Activated CD8-positive, alpha-beta T cell treated with anti-CD3 and anti-CD28 coated beads for 36 hours (primary cell): ENCODE measurements at regions of chr1 and their contacts with region 1.

Region 1: GRCh38 chr1:23613191-23614031 is 54.1 kb upstream of the ID3 start:
- DNase-seq: peak; percentile 85
- ATAC-seq: peak; percentile 63
- H3K4me3 Mint-ChIP-seq: peak overlapping the region; percentile 28
- H3K27ac Mint-ChIP-seq: peak overlapping the region; percentile 89
- H3K4me1 Mint-ChIP-seq: peaks cover 69% of the 10 kb centered on the region
- H3K27me3 Mint-ChIP-seq: no peaks in the 10 kb centered on the region
- CTCF ChIP-seq: no peak

Region 2: DNA sequence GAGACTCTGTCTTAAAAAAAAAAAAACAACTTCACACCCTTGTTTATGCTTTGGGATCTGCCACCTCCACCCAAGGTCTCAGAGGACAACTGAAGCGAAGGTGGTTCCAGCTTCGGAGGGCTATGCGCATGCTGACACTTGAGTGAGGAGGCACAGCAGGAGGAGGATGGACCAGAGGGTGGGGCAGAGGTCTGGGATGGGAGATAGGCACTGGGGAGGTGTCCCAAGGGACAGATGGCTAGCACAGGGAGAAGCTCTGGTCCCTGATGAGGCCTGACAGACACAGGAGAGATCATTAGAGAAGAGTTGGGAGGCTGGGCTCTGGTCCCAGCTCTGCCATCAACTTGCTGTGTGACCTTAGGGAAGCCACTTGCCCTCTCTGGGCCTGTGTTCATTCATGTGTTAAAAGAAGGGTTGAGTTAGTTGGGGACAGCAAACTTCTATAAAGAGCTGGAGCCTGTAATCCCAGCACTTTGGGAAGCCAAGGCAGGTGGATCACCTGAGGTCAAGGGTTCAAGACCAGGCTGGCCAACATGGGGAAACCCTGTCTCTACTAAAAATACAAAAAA is 99.2 kb before region 1 on chr1:
- CTCF ChIA-PET with region 1: no interaction called
- POLR2A ChIA-PET with region 1: no interaction called
- intact Hi-C with region 1: no loop called
- DNase-seq: no peak
- ATAC-seq: no peak
- H3K4me3 Mint-ChIP-seq: no peak overlapping the region
- H3K27ac Mint-ChIP-seq: no peak overlapping the region
- H3K4me1 Mint-ChIP-seq: no peaks in the 10 kb centered on the region
- H3K27me3 Mint-ChIP-seq: no peaks in the 10 kb centered on the region
- CTCF ChIP-seq: no peak

Region 3: DNA sequence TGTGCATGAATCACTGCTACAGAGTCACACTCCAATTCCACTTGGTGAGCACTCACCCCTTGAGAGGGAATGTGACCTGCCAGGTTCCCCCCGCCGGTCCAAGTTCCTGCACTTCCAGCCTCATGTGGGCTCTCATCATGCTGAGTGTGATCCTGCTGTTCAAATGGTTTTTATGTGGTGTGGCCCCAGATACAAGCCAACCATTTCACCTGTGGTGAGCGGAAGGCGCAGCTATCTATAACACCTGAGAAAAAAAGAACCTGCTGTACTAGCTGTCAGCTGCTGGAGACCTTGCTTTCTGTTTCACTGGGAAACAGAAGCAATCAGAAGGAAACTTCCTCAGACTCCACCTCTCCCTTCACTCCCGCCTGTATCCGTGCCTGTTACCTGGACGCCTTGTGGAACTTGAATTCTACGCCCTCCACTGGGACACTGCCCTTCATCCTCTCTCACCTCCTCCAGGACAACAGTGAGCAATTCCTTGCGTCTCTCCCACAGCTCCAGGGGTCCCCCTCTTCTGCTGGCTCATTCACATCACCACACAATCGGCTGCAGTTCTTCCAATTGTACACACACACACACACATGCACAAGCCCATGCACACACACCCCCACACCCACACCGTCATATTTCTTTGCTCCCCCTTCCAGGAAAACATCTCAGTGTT is 13.8 kb after region 1 on chr1:
- CTCF ChIA-PET with region 1: interaction called, 4 read pairs
- POLR2A ChIA-PET with region 1: interaction called, 11 read pairs
- intact Hi-C with region 1: no loop called
- DNase-seq: peak; percentile 37
- ATAC-seq: peak; percentile 13
- H3K4me3 Mint-ChIP-seq: peak overlapping the region; percentile 64
- H3K27ac Mint-ChIP-seq: peak overlapping the region; percentile 58
- H3K4me1 Mint-ChIP-seq: peaks cover 60% of the 10 kb centered on the region
- H3K27me3 Mint-ChIP-seq: no peaks in the 10 kb centered on the region
- CTCF ChIP-seq: no peak

Region 4: GRCh38 chr1:23709229-23709628 is 95.8 kb after region 1 on chr1:
- CTCF ChIA-PET with region 1: no interaction called
- POLR2A ChIA-PET with region 1: no interaction called
- intact Hi-C with region 1: no loop called
- DNase-seq: no peak
- ATAC-seq: no peak
- H3K4me3 Mint-ChIP-seq: no peak overlapping the region
- H3K27ac Mint-ChIP-seq: no peak overlapping the region
- H3K4me1 Mint-ChIP-seq: peaks cover 16% of the 10 kb centered on the region
- H3K27me3 Mint-ChIP-seq: no peaks in the 10 kb centered on the region
- CTCF ChIP-seq: no peak